ENCODE measurements at regions of chrX and their contacts with region 1.

Region 1: GRCh38 chrX:20530406-20530921 is 263.8 kb upstream of the RPS6KA3 start:
- DNase-seq: peak in 1 of 2 donors; percentile 23
- ATAC-seq: peak; percentile 33 to 62
- H3K4me3 ChIP-seq: peak overlapping the region in 3 of 4 donors; percentile 4 to 6 (median 5)
- H3K27ac ChIP-seq: no peak overlapping the region
- H3K4me1 ChIP-seq: peaks cover 0 to 9% of the 10 kb centered on the region in 2 donors
- H3K27me3 ChIP-seq: no peaks in the 10 kb centered on the region
- CTCF ChIP-seq: peak; percentile 51 to 74 (median 55)
- POLR2A ChIP-seq: no peak

Region 2: DNA sequence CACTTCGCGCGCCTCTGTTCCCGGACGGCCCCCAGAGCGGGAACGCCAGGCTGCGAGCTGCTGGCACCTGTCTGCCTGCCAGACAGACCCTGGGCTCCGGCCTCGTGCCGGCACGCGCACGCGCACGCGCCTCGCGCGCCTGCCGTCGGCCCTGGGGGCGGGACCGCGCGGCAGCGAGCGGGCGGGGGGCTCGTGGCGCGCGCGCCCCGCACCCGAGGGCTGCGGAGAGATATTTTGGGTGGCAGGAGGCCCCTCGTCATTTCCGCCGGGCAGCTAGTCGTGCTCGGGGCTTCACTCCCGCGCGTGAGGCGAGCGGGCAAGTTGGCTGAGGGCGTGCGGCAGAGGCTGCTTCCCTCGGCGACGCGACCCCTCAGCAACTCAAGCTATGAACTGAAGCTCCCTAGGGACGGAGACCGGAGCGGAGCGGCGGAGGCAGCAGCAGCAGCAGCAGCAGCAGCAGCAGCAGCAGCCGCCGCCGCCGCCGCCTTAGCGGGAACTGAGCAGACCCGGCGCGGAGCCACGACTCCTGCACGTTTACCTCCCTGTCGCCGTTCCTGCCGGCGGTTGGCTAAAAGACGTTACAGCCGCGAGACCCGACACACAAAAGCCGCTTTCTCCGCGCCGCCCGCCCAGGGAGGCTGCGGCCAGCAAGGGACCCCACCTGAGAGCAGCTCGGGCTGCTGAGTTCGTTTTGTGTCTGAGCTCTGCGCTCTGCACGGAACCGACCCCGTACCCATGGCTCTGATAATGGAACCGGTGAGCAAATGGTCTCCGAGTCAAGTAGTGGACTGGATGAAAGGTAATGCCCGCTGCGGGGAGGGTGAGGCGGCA is 843.9 kb after region 1 on chrX and contains the start of gene CNKSR2:
- in situ Hi-C with region 1: no loop called
- intact Hi-C with region 1: loop called (anchors 10 kb)
- DNase-seq: peak in 1 of 2 donors; percentile 18
- ATAC-seq: peak in 1 of 2 donors; percentile 53
- H3K4me3 ChIP-seq: peak within 1 kb of the TSS; percentile 46 to 57 (median 54)
- H3K27ac ChIP-seq: no peak within 1 kb of the TSS
- H3K4me1 ChIP-seq: peaks cover 0 to 7% of the 10 kb centered on the region in 2 donors
- H3K27me3 ChIP-seq: peaks cover 7 to 32% (median 25%) of the 10 kb centered on the region in 3 donors
- CTCF ChIP-seq: no peak
- POLR2A ChIP-seq: no peak
- total RNA-seq, gene CNKSR2: 0.44 to 8.7 (median 3.0) TPM

Region 3: GRCh38 chrX:21479695-21480270 is 949.3 kb after region 1 on chrX:
- in situ Hi-C with region 1: loop called in 2 of 4 experiments (anchors 25 kb)
- intact Hi-C with region 1: loop called (anchors 2 kb)
- DNase-seq: no peak
- ATAC-seq: no peak
- H3K4me3 ChIP-seq: no peak overlapping the region
- H3K27ac ChIP-seq: no peak overlapping the region
- H3K4me1 ChIP-seq: no peaks in the 10 kb centered on the region
- H3K27me3 ChIP-seq: peaks cover 0 to 3% (median 0%) of the 10 kb centered on the region in 3 donors
- CTCF ChIP-seq: peak in 3 of 5 experiments; percentile 29 to 48 (median 30)
- POLR2A ChIP-seq: no peak

Region 4: GRCh38 chrX:21725496-21725895 is 1195.0 kb after region 1 on chrX:
- in situ Hi-C with region 1: no loop called
- intact Hi-C with region 1: loop called (anchors 2 kb)
- DNase-seq: no peak
- ATAC-seq: peak; percentile 64 to 69
- H3K4me3 ChIP-seq: no peak overlapping the region
- H3K27ac ChIP-seq: peak overlapping the region; percentile 49 to 80 (median 72)
- H3K4me1 ChIP-seq: peaks cover 3 to 6% of the 10 kb centered on the region in 2 donors
- H3K27me3 ChIP-seq: no peaks in the 10 kb centered on the region
- CTCF ChIP-seq: peak in 2 of 5 experiments; percentile 33 to 38
- POLR2A ChIP-seq: no peak

Region 5: DNA sequence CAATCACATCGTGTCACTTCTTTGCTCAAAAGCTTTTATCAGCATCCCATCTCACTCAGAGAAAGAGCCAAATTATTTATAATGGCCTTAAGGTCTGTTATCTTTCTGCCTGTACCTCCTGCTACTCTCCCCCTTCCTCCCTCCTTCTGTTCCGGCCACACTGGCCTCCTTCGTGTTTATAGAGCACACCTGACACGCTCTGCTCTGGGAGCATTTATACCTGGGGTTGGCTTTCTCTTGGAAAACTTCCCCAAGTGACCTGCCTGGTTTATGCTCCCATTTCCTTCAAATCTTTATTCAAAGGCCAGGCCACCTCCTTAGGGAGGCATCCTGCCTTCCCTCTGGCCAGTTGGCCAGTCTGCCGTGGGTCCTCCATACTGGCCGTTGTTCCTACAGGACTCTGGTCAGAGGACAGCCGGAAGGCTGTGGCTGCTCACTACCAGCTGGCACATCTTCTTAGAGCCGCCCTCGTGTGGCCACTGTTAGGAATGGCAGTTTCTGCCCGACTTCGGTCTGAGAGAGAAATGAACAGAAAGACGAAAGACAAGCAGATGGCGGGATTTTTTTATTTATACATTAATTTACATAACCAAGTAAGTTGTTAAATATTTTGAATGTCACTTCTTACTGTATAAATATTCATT is 1662.1 kb after region 1 on chrX:
- in situ Hi-C with region 1: no loop called
- intact Hi-C with region 1: loop called (anchors 10 kb)
- DNase-seq: peak; percentile 7 to 23
- ATAC-seq: peak in 1 of 2 donors; percentile 70
- H3K4me3 ChIP-seq: no peak overlapping the region
- H3K27ac ChIP-seq: no peak overlapping the region
- H3K4me1 ChIP-seq: no peaks in the 10 kb centered on the region
- H3K27me3 ChIP-seq: no peaks in the 10 kb centered on the region
- CTCF ChIP-seq: peak; percentile 33 to 75 (median 53)
- POLR2A ChIP-seq: no peak

Measured in gastrocnemius medialis (tissue), 4 donors.